ENCODE measurements at regions of chr2 and their contacts with region 1.

Region 1: DNA sequence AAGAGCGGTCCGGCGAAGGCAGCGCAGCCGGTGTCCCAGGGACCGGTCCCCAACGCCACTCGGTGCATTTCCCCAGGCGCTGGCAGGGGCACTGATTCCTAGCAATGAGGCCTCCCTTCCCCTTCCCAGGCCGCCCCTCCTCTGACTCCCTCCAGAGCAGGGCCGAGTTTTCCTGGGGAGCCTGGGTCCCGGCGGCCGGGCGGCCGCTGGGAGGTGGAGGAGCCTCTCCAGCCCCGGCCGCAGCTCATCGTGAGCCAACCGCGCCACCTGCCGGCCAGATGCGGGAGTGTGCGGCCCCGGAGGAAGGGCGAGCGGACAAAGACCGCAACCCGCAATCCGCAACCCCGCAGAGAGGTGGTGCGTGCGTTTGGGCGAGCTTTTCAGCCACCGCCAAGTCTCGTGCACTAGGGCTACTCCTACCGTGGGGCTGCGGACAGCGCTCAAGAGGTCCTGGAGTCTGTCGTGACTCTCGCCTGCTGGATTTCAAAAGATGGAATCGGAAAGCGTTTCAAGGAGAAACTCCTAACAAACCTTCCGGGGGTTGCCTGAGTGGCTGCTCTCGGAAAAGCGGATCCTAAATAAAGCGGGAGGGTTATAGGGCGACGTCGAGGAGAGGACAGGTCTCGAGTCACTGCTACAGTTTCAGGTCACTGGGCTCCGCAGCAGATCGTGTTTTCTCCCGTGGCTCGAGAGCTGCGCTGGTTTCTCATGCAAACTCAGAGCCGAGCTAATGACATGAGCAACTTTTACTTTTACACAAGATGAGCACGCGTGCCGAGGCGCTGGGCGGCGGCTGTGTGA is 1.5 kb upstream of the EPHA4 start:
- DNase-seq: peak; percentile 83
- H3K4me3 ChIP-seq: peak overlapping the region; percentile 58 to 61
- H3K27ac ChIP-seq: peak overlapping the region; percentile 76 to 81
- H3K4me1 ChIP-seq: no peaks in the 10 kb centered on the region
- H3K27me3 ChIP-seq: no peaks in the 10 kb centered on the region
- CTCF ChIP-seq: peak; percentile 93 to 98 (median 97)
- POLR2A ChIP-seq: peak; percentile 23

Region 2: DNA sequence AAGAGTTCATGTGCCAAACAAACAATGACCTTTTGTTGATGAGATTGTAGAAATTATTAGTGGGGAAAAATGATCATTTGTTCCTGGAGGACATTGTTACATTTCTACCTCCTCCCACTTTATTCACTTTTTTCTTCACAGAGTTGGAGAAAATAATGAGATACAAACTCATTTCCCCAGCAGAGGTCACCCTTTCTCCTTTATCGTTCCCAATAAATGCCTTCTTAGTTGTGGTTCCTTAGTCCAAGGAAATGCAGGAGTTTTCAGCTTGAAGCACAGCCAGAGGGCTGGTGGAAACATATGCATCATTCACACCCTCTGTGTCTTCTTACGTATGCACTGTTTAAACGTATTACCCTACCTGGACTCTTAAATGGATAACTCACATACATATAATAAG is 1837.4 kb before region 1 on chr2:
- intact Hi-C with region 1: loop called (anchors 2 kb)
- DNase-seq: peak; percentile 29
- H3K4me3 ChIP-seq: no peak overlapping the region
- H3K27ac ChIP-seq: no peak overlapping the region
- H3K4me1 ChIP-seq: no peaks in the 10 kb centered on the region
- H3K27me3 ChIP-seq: peaks cover 3% of the 10 kb centered on the region
- CTCF ChIP-seq: peak; percentile 25 to 66 (median 52)
- POLR2A ChIP-seq: no peak

Region 3: DNA sequence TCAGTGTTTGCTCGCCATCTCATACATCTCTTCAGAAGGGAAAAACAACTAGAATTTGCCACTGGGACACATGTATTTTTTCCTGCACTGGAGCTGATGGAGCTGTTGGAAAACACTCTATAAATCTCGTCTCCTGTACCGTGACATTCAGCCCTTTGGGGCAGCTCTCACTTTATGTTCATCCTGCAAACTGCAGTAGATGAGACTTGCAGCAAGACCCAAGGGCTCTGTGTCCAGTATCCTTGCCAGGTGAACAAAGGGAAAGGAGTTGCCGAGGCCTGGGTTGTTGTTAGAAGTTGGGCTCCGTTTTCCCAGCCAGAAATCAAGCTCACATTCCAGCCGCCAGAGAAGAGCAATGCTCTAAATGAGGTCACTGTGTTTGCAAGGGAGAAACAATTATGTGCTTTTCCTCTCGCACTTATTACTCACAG is 1661.1 kb before region 1 on chr2:
- intact Hi-C with region 1: loop called (anchors 10 kb)
- DNase-seq: no peak
- H3K4me3 ChIP-seq: no peak overlapping the region
- H3K27ac ChIP-seq: no peak overlapping the region
- H3K4me1 ChIP-seq: no peaks in the 10 kb centered on the region
- H3K27me3 ChIP-seq: no peaks in the 10 kb centered on the region
- CTCF ChIP-seq: no peak
- POLR2A ChIP-seq: no peak

Region 4: GRCh38 chr2:220687231-220687843 is 886.3 kb before region 1 on chr2:
- intact Hi-C with region 1: loop called (anchors 2 kb)
- DNase-seq: peak; percentile 61
- H3K4me3 ChIP-seq: no peak overlapping the region
- H3K27ac ChIP-seq: no peak overlapping the region
- H3K4me1 ChIP-seq: no peaks in the 10 kb centered on the region
- H3K27me3 ChIP-seq: no peaks in the 10 kb centered on the region
- CTCF ChIP-seq: peak; percentile 66 to 85 (median 79)
- POLR2A ChIP-seq: no peak

Region 5: DNA sequence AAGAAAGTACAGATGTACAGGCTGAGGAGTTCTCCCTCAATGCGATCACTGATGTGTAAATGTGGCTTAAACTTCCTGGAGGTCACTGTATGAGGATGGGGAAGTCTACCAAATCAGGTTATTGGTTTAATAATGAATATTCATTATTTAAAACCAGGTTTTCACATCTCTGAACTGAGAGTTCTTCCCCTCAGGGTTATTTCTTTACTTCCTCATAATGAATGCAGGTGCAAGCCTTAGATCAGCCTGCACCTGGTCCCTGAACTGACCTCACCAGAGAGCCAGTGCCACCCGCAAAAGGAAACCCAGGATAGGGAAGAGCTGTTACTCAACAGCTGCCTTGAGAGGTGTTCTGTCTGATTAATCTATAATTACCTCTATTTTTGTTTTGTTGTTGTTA is 370.5 kb before region 1 on chr2:
- intact Hi-C with region 1: loop called (anchors 5 kb)
- DNase-seq: no peak
- H3K4me3 ChIP-seq: no peak overlapping the region
- H3K27ac ChIP-seq: no peak overlapping the region
- H3K4me1 ChIP-seq: no peaks in the 10 kb centered on the region
- H3K27me3 ChIP-seq: no peaks in the 10 kb centered on the region
- CTCF ChIP-seq: no peak
- POLR2A ChIP-seq: no peak

Region 6: DNA sequence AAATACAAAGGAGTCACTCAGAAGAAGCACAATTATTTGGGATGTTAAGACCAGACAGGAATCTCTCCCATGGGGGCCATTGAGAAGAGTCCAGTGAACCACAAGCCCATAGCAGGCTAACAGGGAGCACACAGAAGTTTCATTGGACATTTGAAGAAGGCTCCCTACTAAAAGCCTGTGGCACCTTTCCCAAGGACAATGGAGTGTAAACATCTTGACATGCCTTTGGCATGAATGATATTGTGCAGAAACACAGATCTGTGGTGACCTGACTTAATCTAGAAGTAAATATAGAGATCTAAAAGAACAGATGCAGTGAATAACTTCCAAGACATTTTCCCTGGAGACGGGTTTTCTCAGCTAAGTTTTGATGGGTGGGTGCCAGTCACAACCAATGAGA is 223.0 kb before region 1 on chr2:
- intact Hi-C with region 1: no loop called
- DNase-seq: no peak
- H3K4me3 ChIP-seq: no peak overlapping the region
- H3K27ac ChIP-seq: no peak overlapping the region
- H3K4me1 ChIP-seq: no peaks in the 10 kb centered on the region
- H3K27me3 ChIP-seq: no peaks in the 10 kb centered on the region
- CTCF ChIP-seq: no peak
- POLR2A ChIP-seq: no peak

Region 7: GRCh38 chr2:221444106-221444505 is 129.5 kb before region 1 on chr2:
- intact Hi-C with region 1: loop called (anchors 5 kb)
- DNase-seq: no peak
- H3K4me3 ChIP-seq: no peak overlapping the region
- H3K27ac ChIP-seq: no peak overlapping the region
- H3K4me1 ChIP-seq: no peaks in the 10 kb centered on the region
- H3K27me3 ChIP-seq: no peaks in the 10 kb centered on the region
- CTCF ChIP-seq: no peak
- POLR2A ChIP-seq: no peak

Region 8: DNA sequence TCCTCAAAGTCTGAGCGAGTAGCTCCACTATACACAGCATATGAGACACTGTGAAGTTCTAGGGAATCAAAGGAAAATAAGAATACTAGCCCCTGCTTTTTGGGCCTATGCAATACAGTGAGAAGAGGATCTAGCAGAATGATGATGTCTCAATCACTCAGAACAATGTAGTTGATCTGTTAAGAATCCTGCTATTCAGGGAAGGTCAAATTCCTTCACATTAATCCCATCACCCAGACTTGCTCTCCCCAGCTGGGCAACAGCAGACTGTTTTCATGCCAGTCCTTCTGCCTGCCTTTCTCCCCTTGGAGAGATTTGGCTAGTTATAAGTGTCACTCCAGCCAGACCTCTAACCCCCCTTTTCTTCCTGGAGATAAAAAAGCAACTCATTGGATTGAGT is 228.5 kb after region 1 on chr2:
- intact Hi-C with region 1: no loop called
- DNase-seq: no peak
- H3K4me3 ChIP-seq: no peak overlapping the region
- H3K27ac ChIP-seq: no peak overlapping the region
- H3K4me1 ChIP-seq: no peaks in the 10 kb centered on the region
- H3K27me3 ChIP-seq: no peaks in the 10 kb centered on the region
- CTCF ChIP-seq: no peak
- POLR2A ChIP-seq: no peak

Region 9: GRCh38 chr2:221969087-221969829 is 395.6 kb after region 1 on chr2:
- intact Hi-C with region 1: loop called (anchors 1 kb)
- DNase-seq: no peak
- H3K4me3 ChIP-seq: no peak overlapping the region
- H3K27ac ChIP-seq: no peak overlapping the region
- H3K4me1 ChIP-seq: no peaks in the 10 kb centered on the region
- H3K27me3 ChIP-seq: peaks cover 3% of the 10 kb centered on the region
- CTCF ChIP-seq: peak in 3 of 4 experiments; percentile 35 to 52 (median 51)
- POLR2A ChIP-seq: no peak

Measured in prostate gland (tissue), 2 donors.